ENCODE measurements at regions of chr7 and their contacts with region 1.

Region 1: DNA sequence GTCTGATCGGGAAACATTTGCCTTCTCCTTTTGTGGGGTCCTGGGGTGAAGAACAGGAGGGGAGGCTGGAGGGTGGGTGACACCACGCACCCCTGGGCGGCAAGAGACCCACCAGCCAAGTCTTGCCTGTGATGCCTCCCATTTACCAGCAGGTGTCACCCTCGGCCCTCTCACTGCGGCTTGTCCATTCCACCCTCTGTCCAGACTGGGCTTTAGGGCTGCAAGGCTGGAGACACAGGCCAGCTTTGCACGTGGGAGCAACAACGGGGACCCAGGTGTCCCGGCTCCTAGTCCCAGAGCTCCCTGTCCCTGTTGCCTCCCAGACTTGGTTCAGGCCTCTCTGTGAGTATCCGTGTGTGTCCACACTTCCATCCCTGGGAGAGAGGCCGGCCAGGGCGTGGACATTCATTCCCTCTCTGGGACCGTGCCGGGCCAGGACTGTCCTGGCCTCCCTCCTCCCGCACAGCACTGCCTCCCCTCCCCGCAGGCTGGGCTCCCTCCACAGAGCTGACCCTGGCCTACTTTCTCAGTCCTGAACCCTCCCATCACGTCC is 36.2 kb upstream of the GTF2IRD1 start:
- DNase-seq: peak; percentile 33
- H3K4me3 ChIP-seq: no peak overlapping the region
- H3K27ac ChIP-seq: no peak overlapping the region
- H3K4me1 ChIP-seq: no peaks in the 10 kb centered on the region
- H3K27me3 ChIP-seq: no peaks in the 10 kb centered on the region
- CTCF ChIP-seq: peak; percentile 92 to 99

Region 2: DNA sequence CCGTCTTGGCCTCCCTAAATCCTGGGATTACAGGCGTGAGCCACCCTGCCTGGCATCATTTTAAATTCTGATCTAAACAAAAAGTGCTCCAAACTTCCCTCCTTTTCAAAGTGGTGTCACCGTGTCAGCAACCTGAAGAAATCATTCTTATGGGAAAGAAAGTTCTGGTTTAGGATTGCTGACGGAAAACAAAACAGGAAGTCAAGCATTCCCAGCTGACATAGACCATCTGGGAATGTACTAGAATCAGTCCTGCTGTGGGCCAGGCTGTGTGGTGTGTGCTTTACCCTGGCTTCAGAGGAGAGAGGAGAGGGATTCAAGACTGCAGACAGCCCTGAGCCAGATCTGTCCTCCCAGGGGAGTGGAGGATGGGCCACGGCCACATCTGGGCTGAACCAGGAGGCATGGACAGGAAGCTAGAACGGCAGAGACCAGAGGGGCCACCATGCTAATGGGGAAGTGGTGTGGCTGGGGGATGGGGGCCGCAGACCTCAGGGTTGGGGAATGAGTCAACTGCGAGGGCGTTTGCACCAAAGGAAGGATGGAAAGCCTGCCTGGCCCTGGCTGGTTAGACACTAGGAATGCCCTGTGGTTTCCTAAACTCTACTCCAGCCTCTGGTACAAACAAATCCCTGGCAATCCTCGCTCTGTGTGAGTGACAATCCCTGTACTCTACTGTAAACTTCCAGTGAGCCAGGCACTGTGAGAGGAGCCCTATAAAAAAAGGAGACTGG is 145.0 kb before region 1 on chr7:
- CTCF ChIA-PET with region 1: no interaction called
- dilution Hi-C with region 1: no loop called
- in situ Hi-C with region 1: no loop called
- intact Hi-C with region 1: no loop called
- DNase-seq: peak; percentile 67
- H3K4me3 ChIP-seq: no peak overlapping the region
- H3K27ac ChIP-seq: no peak overlapping the region
- H3K4me1 ChIP-seq: peaks cover 19% of the 10 kb centered on the region
- H3K27me3 ChIP-seq: no peaks in the 10 kb centered on the region
- CTCF ChIP-seq: no peak

Region 3: GRCh38 chr7:74320645-74321221 is 96.8 kb before region 1 on chr7:
- CTCF ChIA-PET with region 1: no interaction called
- dilution Hi-C with region 1: no loop called
- in situ Hi-C with region 1: no loop called
- intact Hi-C with region 1: no loop called
- DNase-seq: no peak
- H3K4me3 ChIP-seq: no peak overlapping the region
- H3K27ac ChIP-seq: no peak overlapping the region
- H3K4me1 ChIP-seq: peaks cover 3% of the 10 kb centered on the region
- H3K27me3 ChIP-seq: no peaks in the 10 kb centered on the region
- CTCF ChIP-seq: no peak

Region 4: DNA sequence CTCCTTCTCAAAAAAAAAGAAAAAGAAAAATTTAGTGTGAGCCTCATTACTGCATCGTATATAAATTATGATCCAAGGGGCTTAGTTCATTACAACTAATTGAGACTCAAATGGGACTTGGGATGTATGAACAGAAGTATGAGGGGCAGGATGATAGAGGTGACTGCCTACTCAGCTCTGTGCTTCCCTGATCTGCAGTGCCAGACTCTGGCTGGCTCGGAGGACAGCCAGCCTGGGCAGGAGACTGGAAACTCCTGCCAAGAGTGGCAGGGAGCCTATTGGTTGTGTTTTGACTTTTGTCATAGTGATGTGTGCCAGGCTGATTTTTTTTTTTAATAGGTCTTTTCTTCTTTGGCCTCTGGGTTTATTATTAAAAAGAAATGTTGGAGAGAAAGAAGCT is 37.6 kb before region 1 on chr7:
- CTCF ChIA-PET with region 1: no interaction called
- dilution Hi-C with region 1: no loop called
- in situ Hi-C with region 1: no loop called
- intact Hi-C with region 1: no loop called
- DNase-seq: no peak
- H3K4me3 ChIP-seq: no peak overlapping the region
- H3K27ac ChIP-seq: no peak overlapping the region
- H3K4me1 ChIP-seq: no peaks in the 10 kb centered on the region
- H3K27me3 ChIP-seq: no peaks in the 10 kb centered on the region
- CTCF ChIP-seq: no peak

Region 5: DNA sequence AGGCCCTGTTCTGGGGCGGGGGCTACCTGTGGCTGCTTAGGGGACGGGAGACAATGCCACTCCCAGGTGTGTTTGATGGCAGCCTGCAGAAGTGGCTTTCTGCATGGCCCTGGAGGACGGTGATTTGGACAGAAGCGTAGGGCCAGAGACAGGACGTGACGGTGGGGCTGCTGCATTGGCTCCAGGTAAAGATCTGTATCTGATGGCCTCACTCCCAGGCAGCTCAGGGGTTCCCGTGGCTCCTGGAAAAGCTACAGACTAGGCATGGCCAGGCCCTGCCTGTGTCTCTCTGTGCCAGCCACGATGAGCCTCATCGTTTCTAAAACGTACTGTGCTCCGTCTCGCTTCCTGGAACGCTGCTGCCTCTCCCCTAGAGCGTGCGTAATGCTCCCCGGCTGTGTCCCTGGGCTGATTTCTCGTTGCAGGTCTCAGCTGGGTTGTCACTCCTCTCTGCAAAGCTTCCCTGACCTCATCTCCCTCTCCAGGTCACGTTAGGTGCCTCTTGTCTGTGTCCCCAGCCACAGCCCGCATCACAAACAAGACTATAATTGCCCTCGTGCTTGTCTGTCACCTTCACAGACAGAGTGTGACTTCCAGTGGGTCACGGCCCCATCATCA is 48.8 kb after region 1 on chr7:
- CTCF ChIA-PET with region 1: no interaction called
- dilution Hi-C with region 1: no loop called
- in situ Hi-C with region 1: no loop called
- intact Hi-C with region 1: no loop called
- DNase-seq: no peak
- H3K4me3 ChIP-seq: no peak overlapping the region
- H3K27ac ChIP-seq: no peak overlapping the region
- H3K4me1 ChIP-seq: no peaks in the 10 kb centered on the region
- H3K27me3 ChIP-seq: no peaks in the 10 kb centered on the region
- CTCF ChIP-seq: no peak

Region 6: DNA sequence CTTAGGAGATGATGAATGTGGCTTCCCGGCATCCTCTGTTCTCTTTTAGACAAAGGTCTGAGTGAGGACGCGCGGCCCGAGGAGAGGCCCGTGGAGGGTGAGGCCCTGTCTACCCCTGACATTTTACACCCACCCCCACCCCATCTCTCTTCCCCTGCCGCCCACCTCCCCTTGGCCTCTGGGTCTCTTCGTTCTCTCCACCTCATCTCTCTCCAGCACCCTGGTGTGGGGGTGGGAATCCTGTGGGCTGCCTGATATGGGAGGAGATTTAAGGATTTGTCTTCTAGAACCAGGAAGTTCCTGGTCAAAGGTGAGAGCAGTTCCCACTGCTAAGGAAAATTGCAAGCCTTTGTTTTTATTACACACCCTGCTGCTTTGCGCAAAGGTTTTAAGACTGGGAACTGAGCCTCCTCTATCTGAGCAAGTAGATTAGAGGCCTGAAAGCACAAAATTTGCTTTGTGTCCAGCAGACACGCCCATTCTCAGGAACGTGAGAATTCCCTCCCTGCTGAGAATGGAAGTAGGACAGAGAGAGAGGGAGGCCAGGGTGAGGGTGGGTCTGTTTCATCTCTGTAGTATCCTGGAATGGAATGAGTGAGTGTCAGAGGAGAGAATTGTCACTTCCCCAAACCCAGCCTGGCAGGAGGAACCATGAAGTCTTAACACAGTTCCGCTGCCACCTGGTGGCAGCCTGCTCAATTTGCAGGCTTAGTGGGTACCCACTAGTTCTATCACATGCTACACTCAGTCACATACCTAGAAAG is 127.4 kb after region 1 on chr7:
- CTCF ChIA-PET with region 1: no interaction called
- dilution Hi-C with region 1: no loop called
- in situ Hi-C with region 1: no loop called
- intact Hi-C with region 1: loop called (anchors 2 kb)
- DNase-seq: peak; percentile 23
- H3K4me3 ChIP-seq: no peak overlapping the region
- H3K27ac ChIP-seq: no peak overlapping the region
- H3K4me1 ChIP-seq: peaks cover 9% of the 10 kb centered on the region
- H3K27me3 ChIP-seq: no peaks in the 10 kb centered on the region
- CTCF ChIP-seq: peak; percentile 53 to 54

Region 7: GRCh38 chr7:74569501-74570075 is 152.1 kb after region 1 on chr7:
- CTCF ChIA-PET with region 1: no interaction called
- dilution Hi-C with region 1: no loop called
- in situ Hi-C with region 1: no loop called
- intact Hi-C with region 1: loop called (anchors 2 kb)
- DNase-seq: no peak
- H3K4me3 ChIP-seq: no peak overlapping the region
- H3K27ac ChIP-seq: no peak overlapping the region
- H3K4me1 ChIP-seq: peaks cover under 1% of the 10 kb centered on the region
- H3K27me3 ChIP-seq: no peaks in the 10 kb centered on the region
- CTCF ChIP-seq: no peak

Region 8: DNA sequence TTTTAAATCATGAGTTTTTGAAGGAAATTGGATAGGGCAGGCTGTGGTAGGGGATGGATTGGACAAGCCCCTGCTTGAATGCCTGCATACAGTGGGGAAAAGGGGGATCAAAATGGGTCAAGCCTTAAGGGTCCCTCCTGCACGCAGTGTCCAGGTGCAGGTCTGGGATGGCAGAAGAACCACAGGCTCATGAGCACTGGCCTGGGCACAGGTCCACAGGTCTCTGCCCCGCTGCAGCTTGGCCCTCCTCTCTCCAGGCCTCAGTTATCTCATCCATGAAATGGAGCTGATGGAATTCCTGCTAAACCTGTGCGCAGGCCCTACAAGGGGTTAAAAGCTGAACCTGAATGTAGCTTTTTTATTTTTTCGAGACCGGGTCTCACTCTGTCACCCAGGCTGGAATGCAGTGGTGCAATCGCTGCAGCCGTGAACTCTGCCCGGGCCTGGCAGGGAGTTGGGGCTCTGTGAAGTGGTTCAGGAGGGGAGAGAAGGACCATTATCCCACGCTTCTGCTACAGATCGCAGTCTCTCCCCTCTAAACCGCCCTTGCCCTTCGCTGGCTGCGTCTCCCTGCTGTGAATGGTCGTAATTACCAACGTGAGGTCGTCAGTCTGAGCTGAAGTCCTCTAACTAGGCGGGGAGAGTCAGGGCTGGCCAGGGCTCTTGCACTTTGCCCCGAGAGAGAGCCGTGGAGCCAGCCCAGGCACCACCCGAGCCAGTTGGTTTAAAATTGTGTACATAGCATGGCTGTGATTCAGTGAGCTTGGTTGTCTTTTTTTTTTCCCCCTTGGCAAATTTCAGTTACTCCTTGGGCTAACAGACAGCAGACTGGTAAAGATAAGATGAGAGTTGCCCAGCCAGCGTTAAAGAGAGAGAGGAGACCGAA is 162.5 kb after region 1 on chr7:
- CTCF ChIA-PET with region 1: no interaction called
- dilution Hi-C with region 1: loop called (anchors 5 kb)
- in situ Hi-C with region 1: no loop called
- intact Hi-C with region 1: no loop called
- DNase-seq: peak; percentile 45
- H3K4me3 ChIP-seq: no peak overlapping the region
- H3K27ac ChIP-seq: no peak overlapping the region
- H3K4me1 ChIP-seq: peaks cover 49% of the 10 kb centered on the region
- H3K27me3 ChIP-seq: no peaks in the 10 kb centered on the region
- CTCF ChIP-seq: no peak

Region 9: GRCh38 chr7:75048435-75049379 is 631.2 kb after region 1 on chr7:
- CTCF ChIA-PET with region 1: interaction called, 11 read pairs
- dilution Hi-C with region 1: no loop called
- in situ Hi-C with region 1: loop called in 1 of 2 experiments (anchors 25 kb)
- intact Hi-C with region 1: no loop called
- DNase-seq: peak; percentile 74
- H3K4me3 ChIP-seq: no peak overlapping the region
- H3K27ac ChIP-seq: peak overlapping the region; percentile 38
- H3K4me1 ChIP-seq: peaks cover 26% of the 10 kb centered on the region
- H3K27me3 ChIP-seq: no peaks in the 10 kb centered on the region
- CTCF ChIP-seq: no peak

Measured in mammary epithelial cell (primary cell).